Activated naive CD4-positive, alpha-beta T cell treated with anti-CD3 and anti-CD28 coated beads for 36 hours (primary cell): ENCODE measurements at regions of chr2 and their contacts with region 1.

Region 1: DNA sequence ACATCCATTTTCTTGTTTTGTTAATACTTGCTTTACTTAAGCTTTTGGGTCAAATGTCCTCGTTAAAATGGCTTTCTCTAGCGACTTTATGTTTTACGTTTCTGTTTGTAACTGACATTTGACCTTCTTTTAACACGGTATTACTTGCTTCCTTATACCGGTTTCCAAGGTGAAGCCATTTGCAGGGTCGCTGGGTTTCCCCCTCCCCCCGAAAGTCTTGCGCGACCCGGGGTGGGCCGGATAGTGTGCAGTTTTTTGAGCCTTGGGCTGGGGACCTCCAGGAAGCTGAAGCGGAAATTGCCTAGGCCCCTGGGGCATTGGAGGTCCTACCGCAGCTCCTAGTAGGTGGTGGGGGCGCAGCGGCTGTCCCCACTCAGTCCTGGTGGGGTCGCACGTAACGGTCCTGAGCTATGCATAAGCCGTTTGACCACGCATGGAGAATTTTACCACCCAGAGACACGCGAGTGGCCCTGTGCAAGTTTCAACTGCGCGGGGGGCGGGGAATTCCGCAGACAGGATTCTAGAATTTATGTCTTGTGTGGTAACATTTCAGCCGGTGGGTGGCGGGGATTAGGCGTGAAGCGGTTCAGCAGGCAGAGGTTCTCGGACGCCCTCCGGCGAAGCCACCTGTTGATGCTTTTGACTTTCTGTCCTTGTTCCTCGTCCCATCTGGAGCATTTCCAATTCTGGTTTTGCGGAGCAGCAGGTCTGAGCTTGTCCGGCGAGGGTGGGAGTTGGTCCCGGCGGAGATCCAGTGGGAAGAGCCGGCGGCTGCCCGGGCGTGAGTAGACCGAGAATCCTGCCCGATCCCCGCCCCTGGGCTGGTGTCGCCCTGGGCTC is 2.4 kb downstream of the CFLAR start:
- DNase-seq: peak; percentile 94
- H3K4me3 Mint-ChIP-seq: peak overlapping the region; percentile 96
- H3K27ac Mint-ChIP-seq: peak overlapping the region; percentile 100
- H3K4me1 Mint-ChIP-seq: peaks cover 41% of the 10 kb centered on the region
- H3K27me3 Mint-ChIP-seq: no peaks in the 10 kb centered on the region

Region 2: GRCh38 chr2:200765139-200765951 is 353.0 kb before region 1 on chr2:
- CTCF ChIA-PET with region 1: no interaction called
- intact Hi-C with region 1: loop called (anchors 2 kb)
- DNase-seq: peak; percentile 70
- H3K4me3 Mint-ChIP-seq: peak overlapping the region; percentile 32
- H3K27ac Mint-ChIP-seq: peak overlapping the region; percentile 92
- H3K4me1 Mint-ChIP-seq: peaks cover 27% of the 10 kb centered on the region
- H3K27me3 Mint-ChIP-seq: no peaks in the 10 kb centered on the region

Region 3: GRCh38 chr2:200851398-200852248 is 266.7 kb before region 1 on chr2:
- CTCF ChIA-PET with region 1: no interaction called
- intact Hi-C with region 1: no loop called
- DNase-seq: no peak
- H3K4me3 Mint-ChIP-seq: no peak overlapping the region
- H3K27ac Mint-ChIP-seq: no peak overlapping the region
- H3K4me1 Mint-ChIP-seq: peaks cover 2% of the 10 kb centered on the region
- H3K27me3 Mint-ChIP-seq: no peaks in the 10 kb centered on the region

Region 4: GRCh38 chr2:200901459-200902072 is 216.8 kb before region 1 on chr2:
- CTCF ChIA-PET with region 1: interaction called, 3 read pairs
- intact Hi-C with region 1: loop called (anchors 1 kb)
- DNase-seq: peak; percentile 89
- H3K4me3 Mint-ChIP-seq: no peak overlapping the region
- H3K27ac Mint-ChIP-seq: peak overlapping the region; percentile 84
- H3K4me1 Mint-ChIP-seq: peaks cover 7% of the 10 kb centered on the region
- H3K27me3 Mint-ChIP-seq: no peaks in the 10 kb centered on the region

Region 5: GRCh38 chr2:201130524-201131186 is 12.3 kb after region 1 on chr2:
- CTCF ChIA-PET with region 1: interaction called, 56 read pairs
- intact Hi-C with region 1: loop called (anchors 1 kb)
- DNase-seq: peak; percentile 68
- H3K4me3 Mint-ChIP-seq: peak overlapping the region; percentile 76
- H3K27ac Mint-ChIP-seq: peak overlapping the region; percentile 96
- H3K4me1 Mint-ChIP-seq: peaks cover 56% of the 10 kb centered on the region
- H3K27me3 Mint-ChIP-seq: no peaks in the 10 kb centered on the region

Region 6: DNA sequence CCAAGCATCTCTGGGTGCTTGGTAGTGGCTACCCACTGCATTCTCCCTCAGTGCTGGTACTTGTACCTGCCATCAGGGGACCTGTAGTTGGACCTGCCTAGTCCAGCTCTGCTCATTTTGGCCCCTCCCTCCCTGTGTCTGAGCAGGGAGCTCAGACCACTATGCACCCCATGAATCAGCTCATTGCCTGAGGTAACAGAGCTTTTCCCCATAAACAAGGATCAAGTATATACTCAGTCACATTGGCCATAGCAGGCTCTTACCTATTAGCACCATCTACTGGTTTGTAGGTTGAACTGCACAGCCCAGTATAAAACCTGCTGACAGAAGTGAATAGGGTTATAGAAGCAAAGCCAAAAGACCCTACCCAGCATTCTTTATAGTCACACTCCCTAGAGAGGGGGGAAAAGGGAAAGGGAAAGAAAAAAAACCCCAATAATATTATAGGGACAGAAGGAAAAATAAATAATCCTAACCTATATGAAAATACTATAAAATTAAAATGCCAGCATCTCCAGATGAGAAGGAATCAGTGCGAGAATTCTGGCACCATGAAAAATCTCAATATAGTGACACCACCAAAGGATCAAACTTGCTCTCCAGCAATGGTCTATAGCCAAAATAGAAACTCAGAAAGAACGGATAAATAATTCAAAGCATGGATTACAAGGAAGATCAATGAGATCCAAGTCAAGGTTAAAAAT is 245.7 kb after region 1 on chr2:
- CTCF ChIA-PET with region 1: no interaction called
- intact Hi-C with region 1: loop called (anchors 5 kb)
- DNase-seq: peak; percentile 48
- H3K4me3 Mint-ChIP-seq: no peak overlapping the region
- H3K27ac Mint-ChIP-seq: no peak overlapping the region
- H3K4me1 Mint-ChIP-seq: peaks cover 13% of the 10 kb centered on the region
- H3K27me3 Mint-ChIP-seq: no peaks in the 10 kb centered on the region